ENCODE measurements at regions of chr13 and their contacts with region 1.

Region 1: DNA sequence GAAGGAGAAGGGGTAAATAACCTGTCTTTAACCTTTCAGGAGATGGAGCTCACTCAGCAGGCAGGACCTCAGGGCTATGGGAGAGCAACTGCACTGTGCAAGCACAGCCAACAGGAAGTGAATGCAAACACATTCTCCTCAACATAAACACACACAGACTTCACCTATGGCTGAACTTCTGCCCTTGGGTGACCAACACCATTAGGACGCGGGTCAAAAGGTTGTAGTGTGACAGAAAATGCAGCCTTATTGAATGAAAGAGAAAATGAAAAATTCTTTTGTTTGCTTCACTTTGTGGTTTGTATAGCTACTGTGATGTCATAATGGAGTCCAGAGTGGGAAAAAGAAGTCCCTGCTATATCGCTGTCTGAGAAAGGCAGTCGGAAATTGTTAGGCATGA is 323.0 kb downstream of the NDFIP2 start:
- DNase-seq: no peak
- H3K4me3 ChIP-seq: no peak overlapping the region
- H3K27ac ChIP-seq: no peak overlapping the region
- H3K4me1 ChIP-seq: peaks cover 69% of the 10 kb centered on the region
- H3K27me3 ChIP-seq: no peaks in the 10 kb centered on the region
- CTCF ChIP-seq: no peak

Region 2: GRCh38 chr13:79749984-79750551 is 53.9 kb before region 1 on chr13:
- CTCF ChIA-PET with region 1: no interaction called
- POLR2A ChIA-PET with region 1: no interaction called
- intact Hi-C with region 1: loop called (anchors 2 kb)
- DNase-seq: peak; percentile 97
- H3K4me3 ChIP-seq: no peak overlapping the region
- H3K27ac ChIP-seq: peak overlapping the region; percentile 78
- H3K4me1 ChIP-seq: peaks cover 56% of the 10 kb centered on the region
- H3K27me3 ChIP-seq: no peaks in the 10 kb centered on the region
- CTCF ChIP-seq: no peak

Region 3: DNA sequence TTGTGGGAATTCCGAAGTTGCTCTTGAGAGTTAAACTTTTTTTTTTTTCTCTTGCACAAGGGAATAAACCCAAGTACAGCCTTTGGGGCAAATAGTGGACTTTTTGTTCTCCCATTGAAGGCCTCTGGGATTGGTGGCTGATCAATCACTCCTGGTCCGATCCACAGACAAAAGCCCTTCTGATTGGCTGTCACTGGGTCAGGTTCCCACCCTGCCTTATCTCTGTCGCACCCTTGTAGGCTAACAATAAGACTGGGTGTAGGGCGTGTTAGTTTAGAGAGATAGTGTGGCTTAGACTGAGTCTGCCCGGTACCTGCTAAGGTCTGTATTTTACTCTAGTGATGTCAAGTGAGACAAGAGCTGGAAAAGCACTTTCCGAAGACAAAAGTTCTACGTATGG is 57.7 kb after region 1 on chr13:
- CTCF ChIA-PET with region 1: no interaction called
- POLR2A ChIA-PET with region 1: no interaction called
- intact Hi-C with region 1: no loop called
- DNase-seq: no peak
- H3K4me3 ChIP-seq: no peak overlapping the region
- H3K27ac ChIP-seq: no peak overlapping the region
- H3K4me1 ChIP-seq: peaks cover 9% of the 10 kb centered on the region
- H3K27me3 ChIP-seq: no peaks in the 10 kb centered on the region
- CTCF ChIP-seq: no peak

Region 4: DNA sequence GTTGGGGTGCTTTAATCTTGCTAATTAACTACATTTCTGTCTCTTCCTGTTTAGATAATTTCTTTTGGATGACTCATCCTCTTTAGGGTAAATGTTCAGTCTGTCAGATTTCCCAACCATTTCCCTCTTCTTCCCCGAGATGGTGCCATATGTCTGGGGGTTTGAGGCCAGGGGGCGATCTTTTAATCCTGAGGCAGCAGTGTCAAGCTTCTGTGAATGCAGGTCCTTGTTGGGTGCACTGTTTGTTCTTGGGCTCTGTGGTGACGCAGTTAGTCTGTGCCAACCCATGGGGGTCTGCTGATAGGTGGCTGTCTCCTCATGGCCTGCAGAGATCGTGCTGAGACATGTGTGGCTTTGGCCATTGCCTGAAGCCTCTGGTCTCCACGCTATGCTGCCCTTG is 97.3 kb after region 1 on chr13:
- CTCF ChIA-PET with region 1: no interaction called
- POLR2A ChIA-PET with region 1: no interaction called
- intact Hi-C with region 1: loop called (anchors 5 kb)
- DNase-seq: peak; percentile 93
- H3K4me3 ChIP-seq: no peak overlapping the region
- H3K27ac ChIP-seq: no peak overlapping the region
- H3K4me1 ChIP-seq: peaks cover 33% of the 10 kb centered on the region
- H3K27me3 ChIP-seq: no peaks in the 10 kb centered on the region
- CTCF ChIP-seq: peak; percentile 58

Region 5: GRCh38 chr13:80083853-80084676 is 280.1 kb after region 1 on chr13:
- CTCF ChIA-PET with region 1: no interaction called
- POLR2A ChIA-PET with region 1: no interaction called
- intact Hi-C with region 1: loop called (anchors 2 kb)
- DNase-seq: peak; percentile 86
- H3K4me3 ChIP-seq: peak overlapping the region; percentile 2
- H3K27ac ChIP-seq: peak overlapping the region; percentile 26
- H3K4me1 ChIP-seq: peaks cover 28% of the 10 kb centered on the region
- H3K27me3 ChIP-seq: no peaks in the 10 kb centered on the region
- CTCF ChIP-seq: no peak

Region 6: GRCh38 chr13:80249516-80250212 is 445.7 kb after region 1 on chr13:
- CTCF ChIA-PET with region 1: no interaction called
- POLR2A ChIA-PET with region 1: no interaction called
- intact Hi-C with region 1: loop called (anchors 5 kb)
- DNase-seq: no peak
- H3K4me3 ChIP-seq: no peak overlapping the region
- H3K27ac ChIP-seq: no peak overlapping the region
- H3K4me1 ChIP-seq: peaks cover 21% of the 10 kb centered on the region
- H3K27me3 ChIP-seq: peaks cover 13% of the 10 kb centered on the region
- CTCF ChIP-seq: no peak